BJ (cell line): ENCODE measurements at regions of chr1 and their contacts with region 1.

Region 1: DNA sequence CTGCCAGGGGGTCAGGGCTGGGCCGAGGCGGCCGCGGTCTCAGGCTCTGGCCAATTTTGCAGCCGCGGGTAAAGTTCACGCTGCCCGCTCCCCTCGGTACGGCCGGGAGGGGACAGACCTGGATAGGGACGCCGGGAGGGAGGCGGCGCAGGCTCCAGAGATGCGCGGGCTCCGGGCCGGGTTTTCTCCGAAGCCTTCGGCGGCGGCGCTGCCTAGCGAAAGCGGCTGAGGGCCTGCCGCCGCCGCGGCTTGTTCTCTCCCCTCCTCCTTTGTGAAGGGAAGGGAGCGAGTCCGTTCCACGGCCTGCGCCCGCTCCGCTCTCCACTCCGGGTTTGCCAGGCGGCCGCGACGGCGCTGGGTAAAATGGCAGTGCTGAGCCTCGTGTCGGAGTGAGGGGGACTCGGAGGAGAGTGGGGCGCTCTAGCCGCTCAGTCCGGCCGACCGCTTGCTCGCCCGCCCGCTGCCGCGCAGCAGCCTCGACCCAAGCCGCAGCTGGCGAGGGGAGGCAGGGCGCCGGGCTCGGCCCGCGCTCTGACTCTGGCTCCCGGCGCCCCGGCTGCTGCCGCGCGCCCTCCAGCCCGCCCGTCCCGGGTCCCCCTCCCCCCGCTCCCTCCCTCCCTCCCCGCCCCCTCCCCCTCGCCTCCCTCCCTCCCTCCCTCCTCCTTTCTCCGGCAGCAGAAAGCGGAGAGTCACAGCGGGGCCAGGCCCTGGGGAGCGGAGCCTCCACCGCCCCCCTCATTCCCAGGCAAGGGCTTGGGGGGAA is at the start of gene ARID1A:
- DNase-seq: peak; percentile 74
- H3K4me3 ChIP-seq: peak within 1 kb of the TSS; percentile 67
- H3K27me3 ChIP-seq: no peaks in the 10 kb centered on the region
- CTCF ChIP-seq: peak; percentile 17; the same call in 1 of the 2 replicates
- polyA plus RNA-seq, gene ARID1A: 9.3 and 16.0 TPM in 2 replicates

Region 2: DNA sequence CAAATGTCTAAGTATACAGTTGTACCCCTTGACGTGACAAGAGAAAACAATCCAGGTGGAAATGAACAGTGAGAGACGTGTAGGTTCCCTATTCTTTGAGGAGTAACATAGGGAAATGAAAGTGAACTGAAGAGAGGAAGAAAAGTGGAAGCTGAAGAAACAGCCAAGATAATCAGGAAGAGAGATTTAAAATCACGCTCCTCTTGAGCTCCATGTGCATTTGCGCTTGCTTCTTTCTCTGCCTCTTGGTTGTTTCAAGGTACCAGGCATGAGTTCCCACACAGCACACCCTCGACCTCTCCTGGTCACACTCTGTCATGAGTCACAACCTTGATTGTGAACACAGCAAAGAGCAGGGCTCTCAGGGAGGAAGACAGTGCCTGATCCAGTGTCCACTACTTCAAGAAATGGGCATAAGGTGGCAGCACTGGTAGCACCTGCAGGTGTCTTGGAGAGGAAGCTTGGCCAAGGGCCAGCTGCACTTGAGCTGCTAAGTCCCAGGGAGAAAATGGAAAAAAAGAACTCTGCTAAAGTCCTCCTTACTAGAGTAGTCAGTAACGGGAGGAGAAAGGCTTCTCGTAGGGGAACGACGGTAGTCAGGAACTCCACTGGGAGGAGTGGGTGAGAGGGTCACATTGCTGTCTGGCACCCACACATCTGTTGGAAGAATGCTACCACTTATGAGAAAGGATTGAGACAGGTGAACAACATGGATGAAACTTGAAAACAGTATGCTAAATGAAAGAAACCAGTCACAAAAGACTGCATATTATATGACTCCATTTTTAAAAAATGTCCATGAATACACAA is 18.0 kb before region 1 on chr1:
- CTCF ChIA-PET with region 1: interaction called, 15 read pairs
- POLR2A ChIA-PET with region 1: interaction called, 4 read pairs
- DNase-seq: no peak
- H3K4me3 ChIP-seq: no peak overlapping the region
- H3K27me3 ChIP-seq: no peaks in the 10 kb centered on the region
- CTCF ChIP-seq: peak; percentile 54

Region 3: DNA sequence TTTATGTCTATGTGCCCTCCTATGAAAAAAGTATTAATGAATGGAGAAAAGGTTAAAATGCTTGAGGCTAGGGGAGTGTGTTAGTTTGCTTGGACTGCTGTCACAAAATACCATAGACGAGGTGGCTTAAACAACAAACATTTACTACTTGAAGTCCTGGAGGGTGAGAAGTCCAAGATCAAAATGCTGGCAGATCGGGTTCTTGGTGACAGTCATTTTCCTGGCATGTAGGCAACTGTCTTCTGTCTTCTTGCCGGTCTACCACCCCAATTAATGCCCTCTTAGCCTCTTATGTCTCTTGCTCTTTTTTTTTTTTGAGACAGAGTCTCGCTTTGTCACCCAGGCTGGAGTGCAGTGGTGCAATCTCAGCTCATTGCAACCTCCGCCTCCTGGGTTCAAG is 15.3 kb after region 1 on chr1:
- CTCF ChIA-PET with region 1: no interaction called
- POLR2A ChIA-PET with region 1: no interaction called
- DNase-seq: no peak
- H3K4me3 ChIP-seq: no peak overlapping the region
- H3K27me3 ChIP-seq: no peaks in the 10 kb centered on the region
- CTCF ChIP-seq: no peak

Region 4: DNA sequence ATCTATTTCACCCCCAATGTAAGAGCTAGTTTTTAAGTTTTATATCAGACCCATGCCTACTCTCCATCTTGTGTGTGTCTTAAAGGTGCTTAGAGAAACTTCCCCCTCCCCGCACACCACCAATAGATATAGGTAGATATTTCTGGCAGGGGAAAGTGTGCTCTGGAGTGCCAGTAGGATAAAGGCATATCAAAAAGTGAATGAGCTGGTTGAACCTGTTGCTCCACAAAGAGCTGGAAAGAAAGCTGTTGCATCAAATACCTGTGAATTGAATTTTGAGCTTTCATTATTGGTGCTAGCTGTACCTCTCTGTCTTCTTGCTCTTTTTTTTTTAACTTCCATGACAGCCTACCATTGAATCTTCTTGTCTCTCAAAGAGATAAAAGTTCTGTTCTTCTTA is 33.1 kb after region 1 on chr1:
- CTCF ChIA-PET with region 1: interaction called, 10 read pairs
- POLR2A ChIA-PET with region 1: interaction called, 4 read pairs
- DNase-seq: no peak
- H3K4me3 ChIP-seq: no peak overlapping the region
- H3K27me3 ChIP-seq: no peaks in the 10 kb centered on the region
- CTCF ChIP-seq: no peak